Dendritic cell treated with granulocyte-macrophage colony-stimulating factor and Interleukin-4, amounts not matched to agents 40 ng/mL and 50 ng/mL, for 4 days (primary cell): ENCODE measurements at regions of chr12 and their contacts with region 1.

Region 1: GRCh38 chr12:10235761-10236631 is 23.3 kb downstream of the GABARAPL1 start:
- H3K4me3 Mint-ChIP-seq: no peak overlapping the region
- H3K27ac Mint-ChIP-seq: no peak overlapping the region
- H3K4me1 Mint-ChIP-seq: no peaks in the 10 kb centered on the region
- H3K27me3 Mint-ChIP-seq: no peaks in the 10 kb centered on the region

Region 2: GRCh38 chr12:9992296-9992695 is 243.7 kb before region 1 on chr12:
- intact Hi-C with region 1: no loop called
- H3K4me3 Mint-ChIP-seq: peak overlapping the region; percentile 58
- H3K27ac Mint-ChIP-seq: peak overlapping the region; percentile 76
- H3K4me1 Mint-ChIP-seq: peaks cover 21% of the 10 kb centered on the region
- H3K27me3 Mint-ChIP-seq: no peaks in the 10 kb centered on the region

Region 3: DNA sequence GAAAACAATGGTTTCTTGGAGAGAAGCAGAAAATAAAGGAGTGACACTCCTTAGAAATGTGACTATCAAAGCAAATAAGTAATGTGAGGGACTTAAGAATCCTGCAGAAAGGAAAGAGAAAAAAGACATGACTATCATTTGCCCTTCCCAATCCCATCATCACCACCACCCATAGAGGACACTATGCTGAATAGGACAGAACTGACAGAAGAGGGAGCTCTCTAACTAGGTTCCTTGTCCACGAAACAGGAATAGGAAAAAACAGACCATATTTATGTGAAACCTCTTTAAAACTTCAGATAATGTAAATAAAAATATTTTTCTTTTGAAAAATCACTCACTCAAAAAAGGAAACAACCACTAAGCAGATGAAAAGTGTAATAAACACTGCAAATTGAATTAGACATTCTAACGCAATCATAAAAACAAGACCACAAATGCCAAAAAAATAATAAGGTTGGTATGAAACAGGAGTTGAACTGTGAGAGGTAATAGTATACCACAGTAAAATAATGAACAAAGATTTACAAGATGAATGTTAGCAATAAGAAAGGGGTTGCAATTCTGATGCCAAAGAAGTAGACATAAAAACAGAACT is 95.7 kb after region 1 on chr12:
- intact Hi-C with region 1: loop called (anchors 1 kb)
- H3K4me3 Mint-ChIP-seq: no peak overlapping the region
- H3K27ac Mint-ChIP-seq: no peak overlapping the region
- H3K4me1 Mint-ChIP-seq: peaks cover 12% of the 10 kb centered on the region
- H3K27me3 Mint-ChIP-seq: peaks cover 8% of the 10 kb centered on the region

Region 4: GRCh38 chr12:10562306-10562933 is 326.4 kb after region 1 on chr12:
- intact Hi-C with region 1: loop called (anchors 1 kb)
- H3K4me3 Mint-ChIP-seq: no peak overlapping the region
- H3K27ac Mint-ChIP-seq: no peak overlapping the region
- H3K4me1 Mint-ChIP-seq: no peaks in the 10 kb centered on the region
- H3K27me3 Mint-ChIP-seq: no peaks in the 10 kb centered on the region

Region 5: DNA sequence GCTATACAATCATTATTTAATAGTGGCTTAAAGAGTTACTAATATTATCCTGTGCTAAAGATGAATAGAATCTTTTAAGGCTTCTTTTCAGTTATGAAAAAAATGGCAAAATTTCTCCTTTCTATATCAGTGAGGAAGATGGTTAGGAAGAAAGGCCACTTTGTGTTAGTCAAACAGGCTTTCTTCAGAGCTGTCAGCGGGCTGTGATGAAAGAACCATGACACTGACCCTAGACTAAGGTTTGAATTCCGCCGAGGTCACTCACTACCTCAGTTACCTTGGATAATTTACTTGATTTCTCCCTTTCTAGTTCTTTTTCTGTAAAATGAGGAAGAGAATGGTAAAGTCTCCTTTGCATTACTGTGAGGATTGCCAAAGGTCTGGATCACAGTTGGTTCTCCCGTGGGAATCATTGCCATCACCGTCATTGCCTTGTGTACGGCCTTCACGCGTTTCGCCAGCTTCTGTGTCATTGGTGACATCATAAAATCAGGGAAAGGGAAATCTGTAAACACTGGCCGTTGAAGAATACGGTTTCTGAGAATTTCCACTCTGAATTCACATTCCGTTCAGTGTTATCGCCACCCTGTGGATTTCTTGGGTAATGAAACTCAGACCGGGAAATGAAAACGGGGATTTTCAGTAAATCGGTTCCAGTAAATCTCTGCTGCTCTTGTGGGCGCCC is 513.8 kb after region 1 on chr12:
- intact Hi-C with region 1: loop called (anchors 2 kb)
- H3K4me3 Mint-ChIP-seq: peak overlapping the region; percentile 59
- H3K27ac Mint-ChIP-seq: no peak overlapping the region
- H3K4me1 Mint-ChIP-seq: peaks cover 13% of the 10 kb centered on the region
- H3K27me3 Mint-ChIP-seq: peaks cover 17% of the 10 kb centered on the region

Region 6: GRCh38 chr12:11486623-11487444 is 1250.8 kb after region 1 on chr12:
- intact Hi-C with region 1: loop called (anchors 5 kb)
- H3K4me3 Mint-ChIP-seq: no peak overlapping the region
- H3K27ac Mint-ChIP-seq: no peak overlapping the region
- H3K4me1 Mint-ChIP-seq: no peaks in the 10 kb centered on the region
- H3K27me3 Mint-ChIP-seq: peaks cover 3% of the 10 kb centered on the region